ENCODE measurements at regions of chr1 and their contacts with region 1.

Region 1: DNA sequence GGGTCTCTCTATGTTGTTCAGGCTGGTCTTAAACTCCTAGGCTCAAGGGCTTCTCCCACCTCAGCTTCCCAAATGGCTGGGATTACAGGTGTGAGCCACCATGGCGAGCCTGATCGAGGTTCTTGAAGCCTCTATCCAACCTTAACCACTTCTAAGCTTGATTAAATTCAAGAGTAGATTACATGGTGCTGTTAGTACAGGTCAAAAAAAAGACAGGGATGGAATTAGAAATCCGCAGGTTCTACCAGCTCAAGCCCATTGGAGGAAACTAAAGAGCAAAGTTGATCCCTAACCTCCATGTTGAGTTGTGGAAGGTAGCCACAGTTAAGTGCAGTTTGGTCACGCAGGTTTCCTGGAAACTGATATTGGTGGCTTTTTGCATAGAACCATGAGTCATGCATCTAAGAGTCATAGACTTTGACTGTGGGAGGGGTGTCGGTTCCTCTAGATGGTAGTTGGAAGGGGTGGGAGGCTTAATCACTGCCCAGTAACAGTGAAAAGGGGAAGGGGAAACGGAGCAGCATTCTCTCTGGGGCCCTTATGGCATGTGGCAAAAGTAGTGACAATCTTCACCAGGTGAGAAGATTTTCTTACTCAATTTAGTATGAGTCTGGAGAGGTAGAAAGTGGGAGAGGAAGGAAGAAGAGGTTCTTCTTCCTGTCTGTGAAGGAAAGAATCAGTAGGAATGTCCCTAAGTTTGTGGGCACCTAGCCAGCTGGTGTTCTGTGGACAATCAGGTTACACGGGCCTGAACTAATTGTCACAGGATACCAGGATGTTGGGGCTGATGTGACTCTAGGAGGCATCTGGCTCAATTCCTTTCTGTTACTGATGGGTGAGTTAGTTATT is 7.0 kb downstream of the CD53 start:
- DNase-seq: peak; percentile 91
- H3K4me3 Mint-ChIP-seq: peak overlapping the region; percentile 84
- H3K27ac Mint-ChIP-seq: peak overlapping the region; percentile 99
- H3K4me1 Mint-ChIP-seq: peaks cover 65% of the 10 kb centered on the region
- H3K27me3 Mint-ChIP-seq: no peaks in the 10 kb centered on the region

Region 2: DNA sequence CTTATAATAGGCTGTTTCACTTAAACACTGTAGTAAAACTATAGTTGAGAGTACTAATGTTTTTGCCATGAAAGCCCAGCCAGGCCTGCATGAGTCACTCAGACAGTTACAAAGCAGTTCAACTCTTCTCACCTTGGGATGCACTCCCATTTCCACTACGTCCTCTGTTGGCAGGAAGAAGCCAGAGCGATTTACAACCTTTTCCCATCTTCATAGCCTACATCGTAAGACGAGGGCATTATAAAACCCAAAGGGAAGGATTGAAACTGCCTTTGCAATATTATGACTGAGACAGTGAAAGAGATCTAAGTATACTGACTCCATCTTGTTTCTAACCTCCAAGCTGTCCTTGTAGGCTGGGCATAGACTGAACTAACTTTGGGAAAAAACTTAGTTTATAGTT is 1041.1 kb before region 1 on chr1:
- intact Hi-C with region 1: no loop called
- DNase-seq: no peak
- H3K4me3 Mint-ChIP-seq: no peak overlapping the region
- H3K27ac Mint-ChIP-seq: no peak overlapping the region
- H3K4me1 Mint-ChIP-seq: no peaks in the 10 kb centered on the region
- H3K27me3 Mint-ChIP-seq: peaks cover 7% of the 10 kb centered on the region

Region 3: DNA sequence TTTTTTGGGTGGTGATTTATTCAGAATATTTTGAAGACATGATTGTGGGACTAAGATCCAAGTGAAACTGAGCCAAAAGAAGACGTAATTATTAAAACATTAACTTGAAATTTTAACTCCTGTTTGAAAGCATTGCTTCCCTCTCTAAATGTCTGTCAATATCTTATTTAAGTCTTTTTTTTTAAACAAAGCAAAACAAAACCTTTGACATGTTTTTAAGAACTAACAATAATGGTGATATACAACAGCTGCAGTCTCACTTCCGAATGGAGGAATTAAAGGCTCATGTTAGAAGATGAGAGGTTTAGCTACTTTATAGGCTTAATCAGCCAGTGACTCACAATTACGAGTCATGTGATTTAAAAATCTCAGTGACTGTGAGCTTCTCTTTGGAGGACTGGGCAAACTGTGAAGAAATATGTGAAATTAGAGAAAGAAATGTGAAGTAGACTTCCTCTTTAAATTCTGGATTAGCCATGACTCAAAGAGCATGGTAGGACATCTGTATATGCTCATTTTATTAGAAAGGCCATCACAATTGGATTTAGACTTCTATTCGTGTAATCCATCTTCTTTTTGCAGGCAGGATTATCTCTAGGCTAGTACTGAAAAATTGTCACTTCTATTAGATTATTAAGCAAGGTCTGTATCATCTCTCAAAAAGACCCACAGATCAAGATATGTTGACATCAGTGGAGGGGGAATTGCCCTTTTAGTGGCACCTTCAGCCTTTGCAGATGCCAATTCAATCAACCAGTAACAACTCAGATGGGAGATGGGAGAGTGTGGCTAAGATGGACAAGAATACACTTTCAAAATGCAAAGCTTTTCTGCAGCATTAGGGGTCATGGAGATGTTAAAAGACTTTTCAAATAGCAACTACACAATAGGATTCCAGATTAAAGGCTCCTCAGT is 233.9 kb before region 1 on chr1:
- intact Hi-C with region 1: loop called (anchors 2 kb)
- DNase-seq: peak; percentile 58
- H3K4me3 Mint-ChIP-seq: peak overlapping the region; percentile 36
- H3K27ac Mint-ChIP-seq: peak overlapping the region; percentile 71
- H3K4me1 Mint-ChIP-seq: peaks cover 45% of the 10 kb centered on the region
- H3K27me3 Mint-ChIP-seq: no peaks in the 10 kb centered on the region

Region 4: GRCh38 chr1:110896090-110896489 is 16.1 kb after region 1 on chr1:
- intact Hi-C with region 1: loop called (anchors 2 kb)
- DNase-seq: peak; percentile 76
- H3K4me3 Mint-ChIP-seq: peak overlapping the region; percentile 57
- H3K27ac Mint-ChIP-seq: peak overlapping the region; percentile 89
- H3K4me1 Mint-ChIP-seq: peaks cover 73% of the 10 kb centered on the region
- H3K27me3 Mint-ChIP-seq: no peaks in the 10 kb centered on the region

Region 5: GRCh38 chr1:110916669-110917306 is 36.8 kb after region 1 on chr1:
- intact Hi-C with region 1: loop called (anchors 1 kb)
- DNase-seq: peak; percentile 84
- H3K4me3 Mint-ChIP-seq: peak overlapping the region; percentile 71
- H3K27ac Mint-ChIP-seq: peak overlapping the region; percentile 71
- H3K4me1 Mint-ChIP-seq: peaks cover 17% of the 10 kb centered on the region
- H3K27me3 Mint-ChIP-seq: peaks cover 3% of the 10 kb centered on the region

Region 6: GRCh38 chr1:110951161-110951560 is 71.2 kb after region 1 on chr1:
- intact Hi-C with region 1: no loop called
- DNase-seq: no peak
- H3K4me3 Mint-ChIP-seq: no peak overlapping the region
- H3K27ac Mint-ChIP-seq: no peak overlapping the region
- H3K4me1 Mint-ChIP-seq: peaks cover 10% of the 10 kb centered on the region
- H3K27me3 Mint-ChIP-seq: no peaks in the 10 kb centered on the region

Region 7: GRCh38 chr1:110963691-110964399 is 83.9 kb after region 1 on chr1 and contains the start of gene LRIF1:
- intact Hi-C with region 1: loop called (anchors 1 kb)
- DNase-seq: peak; percentile 100
- H3K4me3 Mint-ChIP-seq: peak within 1 kb of the TSS; percentile 89
- H3K27ac Mint-ChIP-seq: peak within 1 kb of the TSS; percentile 97
- H3K4me1 Mint-ChIP-seq: peaks cover 28% of the 10 kb centered on the region
- H3K27me3 Mint-ChIP-seq: peaks cover 10% of the 10 kb centered on the region
- total RNA-seq, gene LRIF1: 14.0 and 14.4 TPM in 2 replicates

Region 8: DNA sequence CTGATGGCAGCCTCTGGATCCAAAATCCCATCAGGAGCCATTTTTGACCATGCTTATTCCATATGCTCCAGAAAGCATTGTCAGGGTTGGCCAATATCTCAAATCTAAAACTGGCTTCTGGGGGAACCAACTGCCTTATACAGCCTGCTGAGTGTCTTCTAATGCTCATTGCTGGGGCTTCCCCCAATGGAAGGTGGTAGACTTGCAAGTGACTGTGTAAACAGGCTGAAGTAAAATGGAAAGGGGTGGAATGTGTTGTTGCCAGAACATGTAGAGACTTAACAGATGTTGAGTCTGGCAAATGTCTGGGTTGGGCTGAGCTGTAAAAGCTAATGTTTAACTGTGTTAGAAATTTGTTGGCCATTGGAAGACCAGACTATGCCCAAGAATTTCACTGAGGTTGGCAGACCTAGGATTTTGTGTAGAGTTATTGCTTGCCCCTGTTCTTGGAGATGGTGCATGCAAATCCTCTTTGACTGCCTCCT is 106.5 kb after region 1 on chr1:
- intact Hi-C with region 1: no loop called
- DNase-seq: no peak
- H3K4me3 Mint-ChIP-seq: no peak overlapping the region
- H3K27ac Mint-ChIP-seq: no peak overlapping the region
- H3K4me1 Mint-ChIP-seq: peaks cover 8% of the 10 kb centered on the region
- H3K27me3 Mint-ChIP-seq: peaks cover 20% of the 10 kb centered on the region

Region 9: DNA sequence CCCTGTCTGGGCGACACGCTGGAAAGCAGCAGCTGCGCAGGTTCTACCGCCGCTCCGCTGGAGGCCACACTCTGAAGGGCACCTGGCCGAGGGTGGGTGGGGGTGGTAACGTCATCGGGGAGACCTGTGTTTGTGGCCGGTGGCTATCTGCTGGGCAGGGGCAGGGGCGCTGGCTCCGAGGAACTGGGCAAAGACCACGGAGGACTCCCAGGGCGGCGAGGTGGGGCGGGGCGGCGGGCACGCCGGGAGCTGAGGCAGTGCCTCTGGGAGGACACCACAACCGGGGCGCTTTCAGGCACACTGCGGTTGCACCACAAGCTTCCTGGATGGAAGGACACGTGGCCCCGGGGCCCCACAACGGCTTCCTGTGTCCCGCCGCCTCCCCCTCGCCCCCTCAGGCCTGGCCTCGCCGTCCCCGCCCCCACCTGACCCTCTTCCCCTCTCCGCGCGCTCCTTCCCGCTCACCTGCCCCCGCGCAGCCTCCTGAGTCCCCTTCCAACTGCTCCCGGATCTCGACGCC is 323.8 kb after region 1 on chr1:
- intact Hi-C with region 1: loop called (anchors 5 kb)
- DNase-seq: peak; percentile 96
- H3K4me3 Mint-ChIP-seq: peak overlapping the region; percentile 98
- H3K27ac Mint-ChIP-seq: peak overlapping the region; percentile 82
- H3K4me1 Mint-ChIP-seq: peaks cover 55% of the 10 kb centered on the region
- H3K27me3 Mint-ChIP-seq: no peaks in the 10 kb centered on the region

Measured in activated CD4-positive, alpha-beta T cell treated with anti-CD3 and anti-CD28 coated beads, Interleukin-2, amount 10 ng/mL, durations not matched to agents 24 days and 14 days (primary cell).